ENCODE measurements at regions of chr20 and their contacts with region 1.

Region 1: DNA sequence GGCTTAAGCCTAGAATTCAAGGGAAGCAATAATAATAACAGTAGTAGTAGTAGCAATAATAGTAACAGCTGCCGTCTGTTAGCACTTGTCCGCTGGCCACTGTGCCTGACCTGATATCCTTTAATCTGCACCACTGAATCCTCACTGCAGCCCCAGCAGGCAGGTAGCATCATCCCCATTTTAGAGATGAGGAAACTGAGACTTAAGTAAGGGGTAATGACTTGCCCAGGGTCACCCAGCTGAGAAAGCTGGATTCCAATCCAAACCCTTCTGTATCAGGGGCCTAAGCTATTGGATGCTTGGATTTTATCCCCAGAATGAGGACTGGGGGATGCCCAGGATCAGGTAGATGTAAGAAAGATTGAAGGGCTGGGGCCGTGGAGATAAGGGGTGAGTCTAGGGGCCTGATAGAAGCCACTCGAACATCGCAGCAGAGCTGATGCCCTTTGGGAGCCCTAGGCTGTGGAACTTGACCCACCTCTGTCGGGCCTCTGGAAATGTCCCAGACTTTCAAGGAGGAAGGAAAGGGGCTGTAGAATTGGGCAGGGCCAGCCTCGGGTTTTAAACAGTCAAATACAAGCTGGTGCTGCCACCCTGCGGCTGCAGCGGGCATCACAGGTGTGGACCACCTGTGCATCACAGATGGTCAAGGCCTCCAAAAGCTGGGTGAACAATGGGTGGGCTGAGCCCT is 102.1 kb upstream of the MYL9 start:
- DNase-seq: peak; percentile 77
- ATAC-seq: peak; percentile 56
- H3K4me3 Mint-ChIP-seq: no peak overlapping the region
- H3K27ac Mint-ChIP-seq: no peak overlapping the region
- H3K4me1 Mint-ChIP-seq: peaks cover 7% of the 10 kb centered on the region
- H3K27me3 Mint-ChIP-seq: peaks cover 9% of the 10 kb centered on the region

Region 2: DNA sequence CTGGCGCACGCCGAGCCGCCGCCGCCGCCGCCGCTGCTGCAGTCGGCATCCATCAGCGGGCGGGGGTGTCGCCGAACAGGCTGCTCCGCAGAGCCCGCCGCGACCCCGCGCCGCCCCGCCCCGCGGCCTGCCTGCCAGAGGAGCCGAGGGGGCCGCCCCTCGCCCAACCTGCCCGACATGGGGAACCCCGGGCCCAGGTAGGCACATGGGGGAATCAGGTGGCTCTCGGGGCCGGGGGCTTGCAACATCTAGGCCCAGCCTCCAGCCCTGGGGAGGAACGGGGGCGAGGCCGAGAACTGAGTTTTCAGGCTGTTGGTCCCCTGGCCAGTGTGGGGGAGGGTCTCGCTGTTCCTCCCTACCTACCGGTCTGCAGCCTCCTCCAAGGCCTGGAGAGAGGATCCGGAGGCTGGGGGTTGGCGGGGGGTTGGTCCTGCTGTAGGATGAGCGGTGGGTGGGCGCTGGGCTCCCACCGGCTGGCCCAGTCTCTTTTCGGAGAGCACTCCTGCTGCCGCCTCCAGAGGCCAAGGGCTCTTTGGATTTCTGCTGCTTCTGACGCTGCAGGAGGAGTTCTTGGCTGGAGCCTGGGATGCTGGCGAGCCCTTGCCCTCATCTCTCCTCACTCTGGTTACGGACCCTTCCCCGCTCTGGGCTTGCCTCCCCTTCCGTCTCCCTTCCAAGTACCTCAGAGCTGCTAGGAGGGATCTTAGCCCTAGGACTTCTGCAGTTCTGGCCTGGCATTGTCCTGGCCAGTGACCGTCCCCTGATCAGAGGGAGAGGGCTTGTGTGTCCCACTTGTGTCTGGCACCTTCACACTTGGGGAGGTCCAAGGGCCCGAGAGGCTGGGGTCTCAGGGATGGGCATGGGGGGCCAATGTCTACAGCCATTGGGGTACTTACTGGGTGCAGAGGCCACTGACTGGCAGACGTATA is 284.2 kb before region 1 on chr20 and contains the start of gene EPB41L1:
- CTCF ChIA-PET with region 1: interaction called, 11 read pairs
- POLR2A ChIA-PET with region 1: no interaction called
- DNase-seq: no peak
- ATAC-seq: no peak
- H3K4me3 Mint-ChIP-seq: peak within 1 kb of the TSS; percentile 7
- H3K27ac Mint-ChIP-seq: no peak within 1 kb of the TSS
- H3K4me1 Mint-ChIP-seq: no peaks in the 10 kb centered on the region
- H3K27me3 Mint-ChIP-seq: peaks cover 35% of the 10 kb centered on the region
- total RNA-seq, gene EPB41L1: not detected

Region 3: DNA sequence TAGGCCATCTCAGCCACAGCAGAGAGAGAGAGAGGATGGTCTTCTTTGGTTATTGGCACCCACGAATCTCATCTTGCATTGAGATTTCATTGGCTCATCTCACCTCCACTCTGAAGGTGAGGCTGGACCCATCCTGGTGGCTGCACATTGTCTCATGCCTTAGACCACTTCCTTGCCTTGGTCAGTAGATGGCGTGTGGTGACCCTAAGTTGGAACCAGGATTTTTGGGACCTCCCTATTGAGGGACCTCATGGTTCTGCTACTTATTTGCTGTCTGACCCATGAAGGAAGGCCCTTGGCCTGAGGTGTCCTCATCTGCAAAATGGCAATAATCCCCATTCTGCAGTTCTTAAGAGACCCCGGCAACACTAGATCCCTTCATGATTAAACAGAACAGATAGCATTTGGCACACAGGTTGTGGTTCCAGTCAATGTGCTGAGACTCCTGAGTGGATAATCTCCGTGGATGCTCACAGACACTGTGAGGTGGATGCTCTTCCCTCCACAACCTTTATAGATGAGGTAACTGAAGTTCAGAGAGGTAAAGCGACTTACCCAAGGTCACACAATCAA is 224.4 kb before region 1 on chr20:
- CTCF ChIA-PET with region 1: interaction called, 11 read pairs
- POLR2A ChIA-PET with region 1: no interaction called
- DNase-seq: peak; percentile 24
- ATAC-seq: no peak
- H3K4me3 Mint-ChIP-seq: no peak overlapping the region
- H3K27ac Mint-ChIP-seq: no peak overlapping the region
- H3K4me1 Mint-ChIP-seq: peaks cover 2% of the 10 kb centered on the region
- H3K27me3 Mint-ChIP-seq: no peaks in the 10 kb centered on the region

Region 4: GRCh38 chr20:36273414-36274180 is 165.6 kb before region 1 on chr20:
- CTCF ChIA-PET with region 1: interaction called, 29 read pairs
- POLR2A ChIA-PET with region 1: no interaction called
- DNase-seq: peak; percentile 27
- ATAC-seq: no peak
- H3K4me3 Mint-ChIP-seq: no peak overlapping the region
- H3K27ac Mint-ChIP-seq: no peak overlapping the region
- H3K4me1 Mint-ChIP-seq: no peaks in the 10 kb centered on the region
- H3K27me3 Mint-ChIP-seq: no peaks in the 10 kb centered on the region

Region 5: DNA sequence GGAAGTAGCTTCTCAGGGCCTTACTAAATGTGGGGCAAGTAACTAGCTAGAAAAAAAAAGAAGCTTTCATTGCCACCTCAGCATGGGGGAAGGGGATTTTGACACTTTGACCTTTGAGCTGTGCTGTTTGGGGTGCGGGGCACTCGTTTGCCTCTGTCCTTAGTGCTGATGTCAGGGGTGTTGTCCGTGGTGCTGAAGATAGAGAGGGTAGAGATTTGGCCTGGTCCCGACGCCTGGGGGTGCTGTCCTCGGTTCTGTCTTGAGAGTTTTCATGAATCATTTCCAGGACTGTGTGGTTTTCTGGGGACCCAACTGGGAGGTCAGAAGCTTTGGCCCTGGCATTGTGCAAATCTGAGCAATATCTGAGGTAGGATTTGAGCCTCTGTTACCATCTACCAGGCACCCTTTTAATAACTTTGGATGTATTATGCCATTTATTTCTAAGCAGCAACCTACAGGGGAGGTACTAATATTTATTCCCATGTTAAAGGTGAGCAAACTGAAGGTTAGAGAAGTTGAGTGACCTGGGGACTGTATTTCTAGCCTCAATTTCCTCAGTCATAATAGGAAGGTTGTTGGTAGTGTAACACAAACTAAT is 55.1 kb before region 1 on chr20:
- CTCF ChIA-PET with region 1: no interaction called
- POLR2A ChIA-PET with region 1: no interaction called
- DNase-seq: peak; percentile 71
- ATAC-seq: peak; percentile 72
- H3K4me3 Mint-ChIP-seq: no peak overlapping the region
- H3K27ac Mint-ChIP-seq: no peak overlapping the region
- H3K4me1 Mint-ChIP-seq: no peaks in the 10 kb centered on the region
- H3K27me3 Mint-ChIP-seq: no peaks in the 10 kb centered on the region

Region 6: GRCh38 chr20:36493013-36493800 is 54.0 kb after region 1 on chr20:
- CTCF ChIA-PET with region 1: interaction called, 13 read pairs
- POLR2A ChIA-PET with region 1: no interaction called
- DNase-seq: peak; percentile 44
- ATAC-seq: no peak
- H3K4me3 Mint-ChIP-seq: no peak overlapping the region
- H3K27ac Mint-ChIP-seq: peak overlapping the region; percentile 93
- H3K4me1 Mint-ChIP-seq: peaks cover 41% of the 10 kb centered on the region
- H3K27me3 Mint-ChIP-seq: no peaks in the 10 kb centered on the region

Region 7: GRCh38 chr20:36507746-36508145 is 68.6 kb after region 1 on chr20:
- CTCF ChIA-PET with region 1: no interaction called
- POLR2A ChIA-PET with region 1: no interaction called
- DNase-seq: no peak
- ATAC-seq: no peak
- H3K4me3 Mint-ChIP-seq: no peak overlapping the region
- H3K27ac Mint-ChIP-seq: no peak overlapping the region
- H3K4me1 Mint-ChIP-seq: peaks cover 6% of the 10 kb centered on the region
- H3K27me3 Mint-ChIP-seq: no peaks in the 10 kb centered on the region

Region 8: DNA sequence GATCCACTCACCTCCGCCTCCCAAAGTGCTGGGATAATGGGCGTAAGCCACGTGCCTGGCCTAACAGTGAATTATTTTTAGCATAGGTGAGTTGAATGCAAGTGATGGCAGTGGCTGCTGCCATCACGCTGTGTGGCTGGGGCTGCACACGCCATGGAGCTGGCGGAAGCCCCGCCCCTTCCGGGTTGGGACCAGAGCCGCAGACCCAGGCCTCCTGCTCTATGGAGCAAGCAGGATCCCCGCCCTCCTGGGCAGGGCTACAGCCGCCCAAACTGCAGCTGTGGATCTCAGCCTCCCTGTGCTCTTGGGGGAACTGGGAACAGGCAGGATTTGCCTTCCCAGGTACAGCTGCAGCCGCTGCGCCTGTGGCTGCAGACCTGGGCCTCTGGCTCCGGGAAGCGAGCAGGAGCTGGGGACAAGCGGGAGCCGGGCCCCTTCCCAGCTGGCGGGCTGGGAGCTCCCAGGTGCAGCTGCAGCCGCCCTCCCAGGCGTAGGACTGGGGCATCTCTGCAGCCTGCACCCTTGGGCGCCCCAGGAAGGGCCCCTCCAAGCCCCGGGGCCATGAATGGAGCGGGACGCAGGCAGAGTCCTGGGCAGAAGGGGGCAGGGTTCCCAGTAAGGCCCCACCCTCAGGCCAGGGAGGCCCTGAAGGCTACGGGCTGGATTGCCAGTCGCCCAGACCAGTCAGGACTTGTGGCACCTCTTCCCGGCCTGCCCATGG is 237.7 kb after region 1 on chr20:
- CTCF ChIA-PET with region 1: no interaction called
- POLR2A ChIA-PET with region 1: no interaction called
- DNase-seq: no peak
- ATAC-seq: no peak
- H3K4me3 Mint-ChIP-seq: no peak overlapping the region
- H3K27ac Mint-ChIP-seq: no peak overlapping the region
- H3K4me1 Mint-ChIP-seq: no peaks in the 10 kb centered on the region
- H3K27me3 Mint-ChIP-seq: no peaks in the 10 kb centered on the region

Measured in activated CD8-positive, alpha-beta T cell treated with anti-CD3 and anti-CD28 coated beads, Interleukin-2, amount 10 ng/mL, durations not matched to agents 7 days and 5 days (primary cell).